Psoas muscle (tissue), 8 donors: ENCODE measurements at regions of chr14 and their contacts with region 1.

Region 1: GRCh38 chr14:60349663-60350365 is 100.8 kb downstream of the PPM1A start:
- DNase-seq: no peak
- ATAC-seq: peak in 3 of 4 donors; percentile 66 to 89 (median 80)
- H3K4me3 ChIP-seq: peak overlapping the region; percentile 26
- H3K27ac ChIP-seq: no peak overlapping the region
- H3K4me1 ChIP-seq: no peaks in the 10 kb centered on the region
- H3K27me3 ChIP-seq: peaks cover 0 to 2% (median 0%) of the 10 kb centered on the region in 3 donors
- CTCF ChIP-seq: peak; percentile 63

Region 2: DNA sequence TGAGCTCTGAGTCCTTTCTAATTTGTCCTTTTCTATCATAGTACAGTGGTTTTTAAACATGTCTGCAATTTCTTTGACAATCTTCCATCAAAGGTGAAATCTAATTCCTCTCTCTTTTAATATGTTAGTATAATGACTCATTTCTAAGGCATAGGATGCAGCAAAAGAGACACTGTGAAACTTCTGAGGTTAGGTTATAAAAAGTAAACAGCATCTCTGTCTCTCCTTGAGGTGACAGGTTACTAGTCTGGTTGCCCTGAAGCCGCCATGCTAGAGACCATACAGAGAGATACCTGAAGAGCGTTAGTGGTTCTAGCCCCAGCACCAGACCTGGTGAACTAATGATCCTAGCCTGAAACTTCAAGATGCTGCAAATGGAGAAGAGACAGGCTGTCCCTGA is 13.5 kb after region 1 on chr14:
- intact Hi-C with region 1: no loop called
- DNase-seq: no peak
- ATAC-seq: no peak
- H3K4me3 ChIP-seq: no peak overlapping the region
- H3K27ac ChIP-seq: no peak overlapping the region
- H3K4me1 ChIP-seq: no peaks in the 10 kb centered on the region
- H3K27me3 ChIP-seq: no peaks in the 10 kb centered on the region
- CTCF ChIP-seq: no peak

Region 3: GRCh38 chr14:60485598-60486251 is 135.9 kb after region 1 on chr14 and contains the start of gene C14orf39:
- intact Hi-C with region 1: loop called in 1 of 2 experiments (anchors 5 kb)
- DNase-seq: peak; percentile 55 to 80
- ATAC-seq: peak; percentile 91 to 99 (median 96)
- H3K4me3 ChIP-seq: peak within 1 kb of the TSS; percentile 67
- H3K27ac ChIP-seq: no peak within 1 kb of the TSS
- H3K4me1 ChIP-seq: peaks cover 2% of the 10 kb centered on the region
- H3K27me3 ChIP-seq: peaks cover 0 to 10% (median 0%) of the 10 kb centered on the region in 3 donors
- CTCF ChIP-seq: no peak
- total RNA-seq, gene C14orf39: 1.9 to 4.4 (median 3.1) TPM

Region 4: DNA sequence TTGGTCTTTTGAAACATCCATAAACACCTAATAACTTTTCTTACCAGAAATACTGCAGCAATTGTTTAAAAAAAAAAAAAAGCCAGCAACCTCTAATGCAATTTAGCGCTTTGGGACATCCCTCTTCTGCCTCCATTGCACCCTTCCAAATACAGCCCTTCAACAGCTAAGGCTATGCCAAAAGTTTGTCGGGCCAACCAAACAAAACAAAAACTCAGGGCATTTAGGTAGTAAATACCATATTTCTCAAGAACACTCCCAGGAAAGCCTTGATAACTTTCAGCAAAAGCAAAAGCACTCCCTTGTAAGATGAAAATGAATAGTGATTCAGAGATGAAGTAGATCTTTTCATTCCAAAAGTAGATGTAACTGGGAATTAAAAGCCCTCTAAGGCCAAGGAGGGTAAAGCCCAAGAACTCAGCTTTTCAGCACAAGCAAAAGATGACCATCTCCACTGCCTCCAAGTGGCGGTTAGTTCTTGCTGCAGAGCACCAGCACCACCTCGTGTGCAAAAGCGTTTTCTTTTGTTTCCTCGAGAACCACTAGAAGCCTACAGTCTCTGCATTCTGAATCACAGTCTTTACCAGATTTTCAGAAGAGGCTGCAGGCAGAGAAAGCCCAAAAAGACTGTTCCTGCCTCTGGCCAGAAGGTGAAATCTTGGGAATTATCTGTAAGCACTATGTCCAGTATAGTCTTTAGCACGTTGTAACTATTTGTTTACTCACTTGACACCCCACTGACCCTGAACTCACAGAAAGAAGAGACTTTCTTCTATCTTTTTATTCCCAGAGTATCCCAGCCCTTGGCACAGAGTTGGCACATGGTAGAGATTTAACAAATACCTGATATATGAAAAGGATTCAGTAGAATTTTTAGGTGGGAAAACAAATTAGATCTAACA is 212.3 kb after region 1 on chr14:
- intact Hi-C with region 1: loop called (anchors 2 to 5 kb)
- DNase-seq: peak; percentile 31 to 68
- ATAC-seq: peak; percentile 52 to 89 (median 78)
- H3K4me3 ChIP-seq: no peak overlapping the region
- H3K27ac ChIP-seq: no peak overlapping the region
- H3K4me1 ChIP-seq: no peaks in the 10 kb centered on the region
- H3K27me3 ChIP-seq: no peaks in the 10 kb centered on the region
- CTCF ChIP-seq: peak; percentile 60

Region 5: DNA sequence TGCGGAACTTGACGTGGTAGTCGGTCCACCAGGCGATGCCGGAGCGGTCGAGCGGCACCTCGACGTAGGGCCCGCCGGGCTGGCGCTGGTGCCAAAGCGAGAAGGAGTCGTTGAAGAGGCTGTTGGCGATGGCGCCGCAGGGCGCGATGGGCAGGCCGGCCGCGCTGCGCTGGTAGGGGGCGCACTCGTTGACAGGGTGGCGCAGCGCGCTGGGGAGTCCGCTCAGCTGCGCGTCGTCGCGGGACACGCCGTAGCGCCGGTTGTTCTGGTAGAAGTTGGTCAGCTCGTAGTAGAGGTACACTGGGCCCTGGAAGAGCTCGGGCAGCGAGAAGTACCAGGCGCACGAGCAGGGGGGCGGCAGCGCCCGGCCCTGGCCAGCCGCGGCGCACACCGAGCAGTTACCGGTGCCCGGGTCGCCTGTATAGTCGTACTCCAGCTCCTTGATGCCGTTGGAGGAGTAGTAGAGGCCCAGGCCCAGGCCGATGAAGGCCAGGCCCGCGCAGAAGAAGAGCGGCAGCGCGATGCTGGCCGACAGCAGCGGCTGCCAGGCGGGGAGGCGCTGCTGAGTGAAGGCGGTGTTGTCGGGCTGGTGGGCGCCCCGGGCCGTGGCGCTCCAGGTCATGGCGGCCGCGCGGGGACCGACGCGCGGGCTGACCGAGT is 930.8 kb after region 1 on chr14:
- intact Hi-C with region 1: loop called in 1 of 2 experiments (anchors 10 kb)
- DNase-seq: peak; percentile 71 to 89
- ATAC-seq: peak; percentile 90 to 94 (median 90)
- H3K4me3 ChIP-seq: peak overlapping the region; percentile 84
- H3K27ac ChIP-seq: peak overlapping the region; percentile 85
- H3K4me1 ChIP-seq: peaks cover 4% of the 10 kb centered on the region
- H3K27me3 ChIP-seq: no peaks in the 10 kb centered on the region
- CTCF ChIP-seq: peak; percentile 59